CD8-positive, alpha-beta memory T cell (primary cell): ENCODE measurements at regions of chr22 and their contacts with region 1.

Region 1: DNA sequence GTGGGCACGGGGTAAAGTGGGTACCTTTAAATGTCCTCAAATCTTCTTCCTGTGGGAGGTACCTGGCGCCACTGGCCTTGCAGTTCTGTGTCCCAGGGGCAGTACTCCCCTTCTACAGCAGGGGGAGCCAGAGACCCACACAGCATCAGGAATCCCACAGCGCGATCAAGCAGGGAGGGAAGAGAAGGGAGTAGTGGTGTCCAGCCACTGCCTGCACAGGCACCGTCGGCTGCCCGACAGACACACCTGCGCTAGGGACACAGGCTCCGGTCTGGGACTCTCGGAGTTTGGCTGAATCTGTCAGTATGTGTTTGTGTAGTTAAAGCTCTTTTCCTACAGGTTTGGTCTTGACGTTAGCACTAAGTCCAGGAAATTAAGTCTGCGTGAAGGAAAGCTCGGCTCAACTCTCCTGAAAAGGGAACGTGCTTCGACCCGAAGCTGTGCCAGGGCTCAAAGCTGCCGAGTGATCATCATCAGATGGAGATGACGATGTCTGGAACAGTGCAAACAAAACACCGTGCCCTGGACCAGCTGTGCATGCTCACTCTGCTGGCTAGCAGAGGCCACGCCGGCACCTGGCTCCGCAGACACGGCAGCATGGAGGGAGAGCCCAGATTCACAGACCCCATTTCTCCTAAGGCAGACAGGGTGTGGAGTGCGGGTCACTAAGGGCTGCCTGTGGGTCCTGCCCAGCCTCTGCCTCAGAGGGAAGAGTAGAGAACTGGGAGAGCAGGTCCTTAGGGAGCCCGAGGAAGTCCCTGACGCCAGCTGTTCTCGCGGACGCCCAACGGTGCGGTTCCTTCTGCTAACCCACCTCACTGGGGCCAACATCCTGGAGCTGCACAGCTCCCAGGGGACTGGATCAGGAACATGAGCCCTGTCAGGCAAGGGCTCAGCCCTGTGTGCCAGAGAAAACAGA is 56.0 kb upstream of the BID start:
- DNase-seq: peak; percentile 65 to 83 (median 73)
- H3K4me3 ChIP-seq: no peak overlapping the region
- H3K4me3 Mint-ChIP-seq: no peak overlapping the region
- H3K27ac ChIP-seq: no peak overlapping the region
- H3K27ac Mint-ChIP-seq: peak overlapping the region in 1 of 8 donors; percentile 72
- H3K4me1 ChIP-seq: peaks cover 6% of the 10 kb centered on the region
- H3K4me1 Mint-ChIP-seq: peaks cover 0 to 9% (median 7%) of the 10 kb centered on the region in 3 donors
- H3K27me3 ChIP-seq: no peaks in the 10 kb centered on the region
- H3K27me3 Mint-ChIP-seq: no peaks in the 10 kb centered on the region

Region 2: GRCh38 chr22:17842386-17842785 is 12.1 kb after region 1 on chr22:
- CTCF ChIA-PET with region 1: no interaction called
- POLR2A ChIA-PET with region 1: no interaction called
- DNase-seq: peak; percentile 34 to 73 (median 46)
- H3K4me3 ChIP-seq: peak overlapping the region; percentile 29
- H3K4me3 Mint-ChIP-seq: peak overlapping the region; percentile 45 to 81 (median 76)
- H3K27ac ChIP-seq: peak overlapping the region; percentile 27
- H3K27ac Mint-ChIP-seq: peak overlapping the region; percentile 40 to 88 (median 72)
- H3K4me1 ChIP-seq: peaks cover 9% of the 10 kb centered on the region
- H3K4me1 Mint-ChIP-seq: peaks cover 0 to 19% (median 12%) of the 10 kb centered on the region in 3 donors
- H3K27me3 ChIP-seq: no peaks in the 10 kb centered on the region
- H3K27me3 Mint-ChIP-seq: no peaks in the 10 kb centered on the region

Region 3: DNA sequence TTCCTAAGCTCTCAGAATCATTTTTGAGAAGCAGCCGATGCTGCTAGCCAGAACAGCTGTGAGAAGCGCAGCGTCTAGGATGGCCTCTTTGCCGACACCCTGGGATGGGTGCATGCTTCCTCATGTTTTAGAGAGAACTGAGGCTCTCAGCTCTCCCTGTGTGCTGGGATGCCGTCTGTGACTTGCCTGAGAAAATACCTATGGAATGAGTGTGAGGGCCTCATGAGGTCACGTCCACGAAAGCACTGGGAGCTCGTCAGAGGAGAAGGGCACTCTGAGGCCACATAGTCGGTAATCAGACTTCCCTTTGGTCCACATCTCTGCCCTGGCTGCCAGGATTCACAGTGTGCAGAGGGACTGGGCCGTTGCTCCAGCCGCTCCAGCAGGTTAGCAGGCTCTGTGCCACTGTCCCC is 139.4 kb after region 1 on chr22:
- CTCF ChIA-PET with region 1: no interaction called
- POLR2A ChIA-PET with region 1: no interaction called
- DNase-seq: no peak
- H3K4me3 ChIP-seq: no peak overlapping the region
- H3K4me3 Mint-ChIP-seq: no peak overlapping the region
- H3K27ac ChIP-seq: peak overlapping the region; percentile 27
- H3K27ac Mint-ChIP-seq: no peak overlapping the region
- H3K4me1 ChIP-seq: no peaks in the 10 kb centered on the region
- H3K4me1 Mint-ChIP-seq: peaks cover 9 to 21% (median 17%) of the 10 kb centered on the region in 3 donors
- H3K27me3 ChIP-seq: no peaks in the 10 kb centered on the region
- H3K27me3 Mint-ChIP-seq: no peaks in the 10 kb centered on the region

Region 4: DNA sequence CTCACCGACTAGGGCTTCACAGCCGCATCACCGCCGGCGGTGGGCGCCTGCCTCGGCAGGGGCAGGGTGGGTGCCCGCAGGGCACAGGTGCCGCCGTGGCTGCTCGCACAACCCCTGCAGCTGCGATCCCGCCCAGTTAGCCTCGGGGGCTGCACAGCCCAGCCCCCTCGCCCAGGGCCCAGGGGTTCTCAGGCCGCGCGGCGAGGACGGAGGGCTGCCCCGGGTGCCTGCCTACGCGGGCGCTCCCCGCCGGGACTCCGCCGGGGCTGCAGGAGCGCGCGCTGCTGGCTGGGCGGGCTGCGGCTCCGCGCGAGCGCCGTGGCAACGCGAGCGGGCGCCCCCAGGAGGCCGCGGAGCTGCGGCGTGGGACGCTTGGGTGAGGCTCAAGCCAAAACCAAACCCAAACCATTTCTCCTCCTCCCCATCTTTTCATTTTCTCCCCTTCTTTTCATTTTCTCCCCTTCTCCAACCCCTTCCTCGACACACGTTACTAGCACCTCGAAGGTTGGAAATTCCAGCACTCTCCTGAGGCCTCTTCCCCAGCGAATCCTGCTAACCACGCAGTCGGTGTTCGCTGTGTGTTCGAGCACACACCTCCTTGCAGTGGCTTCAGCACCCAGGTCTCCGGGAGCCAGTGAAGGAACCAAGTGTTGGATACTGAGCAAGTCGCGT is 194.1 kb after region 1 on chr22 and contains the start of gene MICAL3:
- CTCF ChIA-PET with region 1: interaction called, 18 read pairs
- POLR2A ChIA-PET with region 1: no interaction called
- DNase-seq: peak; percentile 38 to 60 (median 55)
- H3K4me3 ChIP-seq: peak within 1 kb of the TSS; percentile 65
- H3K4me3 Mint-ChIP-seq: peak within 1 kb of the TSS; percentile 75 to 94 (median 90)
- H3K27ac ChIP-seq: no peak within 1 kb of the TSS
- H3K27ac Mint-ChIP-seq: no peak within 1 kb of the TSS
- H3K4me1 ChIP-seq: peaks cover 5% of the 10 kb centered on the region
- H3K4me1 Mint-ChIP-seq: peaks cover 11 to 19% (median 12%) of the 10 kb centered on the region in 3 donors
- H3K27me3 ChIP-seq: peaks cover 13% of the 10 kb centered on the region
- H3K27me3 Mint-ChIP-seq: peaks cover 26 to 60% of the 10 kb centered on the region in 2 donors
- total RNA-seq, gene MICAL3: 51.7 to 51.9 TPM

Region 5: GRCh38 chr22:18077639-18078328 is 247.5 kb after region 1 on chr22 and contains the start of gene PEX26:
- CTCF ChIA-PET with region 1: interaction called, 115 read pairs
- POLR2A ChIA-PET with region 1: no interaction called
- DNase-seq: peak; percentile 91 to 96 (median 93)
- H3K4me3 ChIP-seq: peak within 1 kb of the TSS; percentile 93
- H3K4me3 Mint-ChIP-seq: peak within 1 kb of the TSS; percentile 91 to 99 (median 95)
- H3K27ac ChIP-seq: peak within 1 kb of the TSS; percentile 84
- H3K27ac Mint-ChIP-seq: peak within 1 kb of the TSS; percentile 92 to 100 (median 97)
- H3K4me1 ChIP-seq: peaks cover 37% of the 10 kb centered on the region
- H3K4me1 Mint-ChIP-seq: peaks cover 54 to 63% (median 62%) of the 10 kb centered on the region in 3 donors
- H3K27me3 ChIP-seq: no peaks in the 10 kb centered on the region
- H3K27me3 Mint-ChIP-seq: no peaks in the 10 kb centered on the region
- total RNA-seq, gene PEX26: 56.7 to 59.3 TPM